ENCODE measurements at regions of chr2 and their contacts with region 1.

Region 1: DNA sequence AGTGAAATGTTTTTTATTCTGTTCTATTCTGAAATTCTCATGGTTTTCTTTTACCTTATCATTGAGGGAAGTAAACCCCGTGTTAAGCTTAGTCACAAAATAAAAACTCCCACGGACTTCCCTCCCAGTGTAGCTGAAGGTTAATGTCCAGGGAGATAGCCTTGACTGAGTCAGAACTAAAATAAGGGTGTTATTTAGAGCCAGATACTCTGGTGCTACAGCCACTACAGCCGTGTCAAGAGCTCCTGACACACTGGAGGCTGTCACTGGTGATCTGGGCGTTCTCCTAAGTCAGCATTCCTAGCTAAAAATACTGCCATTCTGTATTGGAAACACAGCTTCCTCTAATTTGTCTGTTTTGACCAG is 82.0 kb upstream of the RANBP2 start:
- DNase-seq: no peak
- H3K4me3 Mint-ChIP-seq: no peak overlapping the region
- H3K27ac Mint-ChIP-seq: no peak overlapping the region
- H3K4me1 Mint-ChIP-seq: peaks cover 41% of the 10 kb centered on the region
- H3K27me3 Mint-ChIP-seq: no peaks in the 10 kb centered on the region

Region 2: DNA sequence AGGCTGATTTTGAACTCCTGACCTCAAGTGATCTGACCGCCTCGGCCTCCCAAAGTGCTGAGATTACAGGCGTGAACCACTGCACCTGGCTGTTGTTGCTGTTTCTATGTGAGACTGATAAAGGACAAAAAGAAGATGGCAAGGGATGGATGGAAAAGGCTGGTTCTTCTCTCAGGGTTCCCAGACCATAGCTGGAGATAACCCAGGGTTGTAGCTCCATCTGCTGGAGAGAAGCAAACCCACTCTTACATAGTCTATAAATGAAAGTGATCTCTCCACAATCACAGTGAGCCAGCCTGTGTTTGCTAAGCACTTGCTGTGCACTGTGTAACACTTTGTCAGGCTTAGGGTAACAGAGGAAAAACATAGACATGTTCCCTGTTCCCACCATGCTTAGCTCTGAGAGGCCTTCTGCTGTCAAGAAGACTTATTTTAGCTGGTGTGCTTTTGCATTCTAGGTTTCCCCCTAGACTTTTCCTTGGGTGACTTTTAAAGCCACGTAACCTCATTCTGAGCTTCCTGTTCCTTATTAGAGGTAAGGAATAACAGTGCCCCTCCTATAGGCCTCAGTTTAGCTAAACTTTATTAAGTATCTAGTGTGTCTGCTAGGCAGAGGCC is 53.3 kb before region 1 on chr2:
- CTCF ChIA-PET with region 1: interaction called, 14 read pairs
- DNase-seq: peak; percentile 73
- H3K4me3 Mint-ChIP-seq: no peak overlapping the region
- H3K27ac Mint-ChIP-seq: no peak overlapping the region
- H3K4me1 Mint-ChIP-seq: peaks cover 16% of the 10 kb centered on the region
- H3K27me3 Mint-ChIP-seq: no peaks in the 10 kb centered on the region

Region 3: DNA sequence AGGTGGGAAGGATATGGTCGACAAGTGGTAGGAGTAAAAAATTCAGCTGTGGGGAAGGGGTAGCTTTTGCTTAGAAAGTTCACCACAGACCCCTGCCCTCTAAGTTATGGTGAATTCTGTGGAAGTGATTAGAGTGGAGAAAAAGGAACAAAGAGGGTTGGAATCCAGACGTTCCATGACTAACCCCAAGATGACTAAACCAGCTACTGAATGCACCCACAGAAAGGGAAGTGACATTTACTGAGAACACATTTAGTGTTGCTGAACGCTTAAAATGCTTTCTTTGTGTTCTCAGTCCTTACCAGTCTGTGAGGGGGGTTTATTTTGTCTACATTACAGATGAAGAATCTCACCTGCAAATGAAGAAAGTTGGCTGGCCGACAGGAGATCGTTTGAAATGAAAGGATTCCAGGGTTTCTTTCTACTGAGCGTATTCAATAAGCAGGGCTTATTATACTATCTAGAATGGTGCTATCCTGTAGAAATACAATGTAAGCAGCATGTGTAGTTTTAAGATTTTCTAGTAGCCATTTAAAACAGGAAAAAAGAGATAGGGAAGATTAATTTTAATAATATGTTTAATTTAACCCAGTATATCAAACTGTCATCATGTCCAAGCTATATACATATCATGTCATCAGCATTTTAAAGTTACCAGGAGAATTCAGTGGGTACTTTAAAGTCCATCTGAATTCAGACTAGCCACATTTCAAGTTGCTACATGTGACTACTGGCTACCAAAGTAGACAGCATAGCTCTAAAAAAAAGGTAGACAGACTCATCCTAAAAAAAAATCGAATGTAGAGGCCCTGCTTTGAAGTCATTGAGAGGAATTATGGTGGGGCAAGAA is 42.9 kb before region 1 on chr2:
- CTCF ChIA-PET with region 1: interaction called, 43 read pairs
- DNase-seq: no peak
- H3K4me3 Mint-ChIP-seq: no peak overlapping the region
- H3K27ac Mint-ChIP-seq: no peak overlapping the region
- H3K4me1 Mint-ChIP-seq: peaks cover 27% of the 10 kb centered on the region
- H3K27me3 Mint-ChIP-seq: no peaks in the 10 kb centered on the region

Region 4: DNA sequence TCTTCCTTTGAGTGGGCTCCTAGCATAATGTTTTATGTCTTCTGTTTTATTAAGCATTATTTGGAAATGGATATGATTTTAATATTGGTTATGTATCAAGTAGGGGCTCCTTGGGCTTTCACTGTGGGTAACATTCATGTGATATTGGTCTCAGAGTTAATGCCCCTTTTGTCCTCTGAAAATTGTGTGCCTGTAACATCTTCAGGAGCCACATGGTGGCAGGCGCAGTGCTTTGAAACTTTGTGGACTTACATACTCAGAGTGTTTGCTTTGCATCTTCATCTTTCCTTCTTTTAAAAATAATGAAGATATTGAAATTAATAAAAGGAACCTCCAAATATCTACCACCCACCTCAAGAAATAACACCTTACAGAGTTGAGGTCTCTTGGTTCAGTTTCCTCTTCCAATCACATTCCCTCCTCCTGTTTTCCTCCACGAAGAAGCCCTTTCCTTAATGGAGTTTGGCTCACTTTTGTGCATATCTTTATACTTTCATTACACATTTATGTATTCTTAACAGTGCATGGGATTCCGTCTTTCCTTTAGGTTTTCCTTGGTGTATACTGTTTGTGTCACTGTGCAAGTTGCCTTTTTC is 29.5 kb before region 1 on chr2:
- CTCF ChIA-PET with region 1: interaction called, 162 read pairs
- DNase-seq: peak; percentile 70
- H3K4me3 Mint-ChIP-seq: no peak overlapping the region
- H3K27ac Mint-ChIP-seq: no peak overlapping the region
- H3K4me1 Mint-ChIP-seq: peaks cover 39% of the 10 kb centered on the region
- H3K27me3 Mint-ChIP-seq: no peaks in the 10 kb centered on the region

Region 5: DNA sequence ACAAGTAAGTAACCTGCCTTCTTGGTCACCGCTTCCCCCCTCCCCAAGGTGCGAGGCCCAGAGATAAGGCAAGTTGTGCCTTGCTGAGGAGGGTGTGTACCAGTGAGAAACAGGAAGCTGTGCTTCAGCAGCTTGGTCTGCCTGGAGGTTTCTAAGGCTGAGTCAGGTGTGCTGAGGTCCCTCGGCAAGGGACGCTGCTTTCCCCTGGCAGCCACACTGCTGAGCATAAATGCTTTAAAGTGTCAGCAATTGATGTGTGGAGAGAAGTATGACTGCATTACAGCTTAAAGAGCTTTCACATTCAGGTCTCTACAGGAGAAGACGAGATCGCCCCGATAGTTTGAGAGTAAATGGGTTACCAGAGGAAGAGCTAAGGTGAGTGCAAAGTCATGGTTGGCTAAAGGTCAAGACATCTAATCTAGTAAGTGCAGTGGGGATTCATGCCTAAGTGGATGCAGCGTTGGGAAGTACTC is 16.2 kb before region 1 on chr2:
- CTCF ChIA-PET with region 1: interaction called, 144 read pairs
- DNase-seq: peak; percentile 87
- H3K4me3 Mint-ChIP-seq: peak overlapping the region; percentile 78
- H3K27ac Mint-ChIP-seq: peak overlapping the region; percentile 96
- H3K4me1 Mint-ChIP-seq: peaks cover 78% of the 10 kb centered on the region
- H3K27me3 Mint-ChIP-seq: no peaks in the 10 kb centered on the region

Region 6: DNA sequence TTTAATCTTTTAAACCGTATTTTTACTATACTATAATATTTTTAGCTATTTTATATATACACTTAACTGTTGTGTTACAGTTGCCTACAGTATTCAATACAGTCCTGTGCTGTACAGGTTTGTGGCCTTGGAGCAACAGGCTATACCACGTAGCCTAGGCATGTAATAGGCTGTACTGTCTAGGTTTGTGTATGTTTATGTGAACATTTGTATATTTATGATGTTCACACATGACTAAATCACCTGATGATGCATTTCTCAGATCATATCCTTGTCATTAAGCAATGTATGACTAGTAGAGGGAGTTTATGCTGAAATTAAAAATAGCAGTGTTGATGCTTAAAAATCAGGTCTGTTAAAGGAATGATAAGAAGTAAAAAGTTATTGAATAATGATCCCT is 10.3 kb before region 1 on chr2:
- CTCF ChIA-PET with region 1: interaction called, 144 read pairs
- DNase-seq: no peak
- H3K4me3 Mint-ChIP-seq: no peak overlapping the region
- H3K27ac Mint-ChIP-seq: no peak overlapping the region
- H3K4me1 Mint-ChIP-seq: peaks cover 71% of the 10 kb centered on the region
- H3K27me3 Mint-ChIP-seq: no peaks in the 10 kb centered on the region

Measured in activated naive CD4-positive, alpha-beta T cell treated with anti-CD3 and anti-CD28 coated beads, Interleukin-2, amount 10 ng/mL, durations not matched to agents 7 days and 5 days (primary cell).